ENCODE measurements at regions of chr15 and their contacts with region 1.

Region 1: DNA sequence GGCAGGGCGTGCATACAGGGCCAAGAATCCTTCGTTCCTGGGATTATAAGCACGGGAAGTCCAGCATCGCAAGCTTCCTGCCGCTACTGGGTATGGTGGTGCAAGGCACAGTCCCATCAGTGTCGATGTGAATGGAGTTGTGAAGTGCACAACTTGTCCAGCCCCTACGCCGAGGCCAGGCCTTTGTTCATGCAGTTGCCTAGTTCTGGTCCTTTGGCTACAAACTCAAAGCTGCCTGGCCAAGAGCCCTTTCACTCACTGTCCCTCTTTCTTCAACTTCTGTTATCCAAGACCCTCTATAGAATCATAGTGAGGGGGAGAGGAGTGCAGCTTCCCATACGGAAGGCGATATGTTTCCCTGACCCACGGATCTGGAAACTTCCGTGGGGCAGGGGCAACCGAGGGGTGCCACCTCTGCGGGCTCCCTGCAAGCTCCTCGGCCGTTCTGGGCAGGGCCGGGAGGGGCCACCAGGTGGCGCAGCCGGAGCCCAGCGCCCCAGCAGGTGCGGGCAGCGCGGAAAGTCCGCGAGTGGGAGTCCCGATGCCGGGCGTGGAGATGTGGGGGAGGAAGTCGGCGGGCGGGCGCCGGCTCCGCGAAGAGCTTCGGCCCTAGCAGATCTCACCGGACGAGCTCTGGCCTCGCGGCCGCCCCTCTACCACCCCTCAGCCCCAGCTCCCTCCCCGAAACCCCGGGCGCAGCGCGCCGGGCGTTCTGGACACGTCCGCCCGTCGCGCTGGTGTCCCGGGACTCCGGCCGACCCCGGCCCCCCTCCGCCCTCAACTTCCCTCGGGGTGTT is 693 bp downstream of the RASGRP1 start:
- DNase-seq: peak; percentile 56 to 79
- ATAC-seq: peak; percentile 70 to 94 (median 82)
- H3K4me3 ChIP-seq: peak overlapping the region; percentile 68
- H3K27ac ChIP-seq: no peak overlapping the region
- H3K4me1 ChIP-seq: peaks cover 3% of the 10 kb centered on the region
- H3K27me3 ChIP-seq: peaks cover 0 to 26% (median 0%) of the 10 kb centered on the region in 3 donors
- CTCF ChIP-seq: peak; percentile 75

Region 2: DNA sequence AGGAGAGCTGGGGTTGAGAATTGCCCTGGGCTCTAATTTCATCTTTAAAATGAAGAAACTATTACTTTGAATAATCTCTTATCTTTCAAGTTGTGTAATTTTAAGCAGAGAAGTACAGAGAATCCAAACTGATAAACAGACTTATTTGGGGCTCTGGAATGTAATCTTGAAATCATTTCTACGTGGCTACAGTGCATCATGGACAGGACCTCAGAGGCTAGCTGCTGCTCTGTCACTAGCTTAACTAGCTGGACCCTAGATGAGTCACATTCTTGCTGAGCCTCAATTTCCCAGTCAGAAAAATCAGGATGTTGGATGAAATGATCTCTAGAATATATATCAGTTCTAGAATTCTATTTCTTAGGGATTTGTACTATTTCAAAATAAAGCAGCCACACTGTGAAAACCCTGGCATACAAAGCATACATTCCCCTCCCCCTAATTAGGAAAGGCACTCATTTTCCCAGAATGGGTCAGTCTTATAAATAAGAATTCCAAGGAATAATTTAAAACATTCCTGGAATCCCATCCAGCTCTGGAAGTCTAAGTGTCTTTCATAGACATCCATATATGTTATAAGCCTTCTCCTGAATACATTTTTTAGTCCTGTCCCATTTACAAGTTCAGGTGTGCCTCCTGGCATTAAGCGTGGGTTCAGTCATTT is 46.5 kb before region 1 on chr15:
- intact Hi-C with region 1: loop called in 1 of 2 experiments (anchors 1 kb)
- DNase-seq: no peak
- ATAC-seq: no peak
- H3K4me3 ChIP-seq: no peak overlapping the region
- H3K27ac ChIP-seq: no peak overlapping the region
- H3K4me1 ChIP-seq: no peaks in the 10 kb centered on the region
- H3K27me3 ChIP-seq: peaks cover 0 to 12% (median 3%) of the 10 kb centered on the region in 3 donors
- CTCF ChIP-seq: no peak

Region 3: GRCh38 chr15:38647683-38648082 is 83.8 kb after region 1 on chr15:
- intact Hi-C with region 1: loop called in 1 of 2 experiments (anchors 5 kb)
- DNase-seq: no peak
- ATAC-seq: no peak
- H3K4me3 ChIP-seq: no peak overlapping the region
- H3K27ac ChIP-seq: no peak overlapping the region
- H3K4me1 ChIP-seq: no peaks in the 10 kb centered on the region
- H3K27me3 ChIP-seq: peaks cover 0 to 2% (median 0%) of the 10 kb centered on the region in 3 donors
- CTCF ChIP-seq: no peak

Region 4: DNA sequence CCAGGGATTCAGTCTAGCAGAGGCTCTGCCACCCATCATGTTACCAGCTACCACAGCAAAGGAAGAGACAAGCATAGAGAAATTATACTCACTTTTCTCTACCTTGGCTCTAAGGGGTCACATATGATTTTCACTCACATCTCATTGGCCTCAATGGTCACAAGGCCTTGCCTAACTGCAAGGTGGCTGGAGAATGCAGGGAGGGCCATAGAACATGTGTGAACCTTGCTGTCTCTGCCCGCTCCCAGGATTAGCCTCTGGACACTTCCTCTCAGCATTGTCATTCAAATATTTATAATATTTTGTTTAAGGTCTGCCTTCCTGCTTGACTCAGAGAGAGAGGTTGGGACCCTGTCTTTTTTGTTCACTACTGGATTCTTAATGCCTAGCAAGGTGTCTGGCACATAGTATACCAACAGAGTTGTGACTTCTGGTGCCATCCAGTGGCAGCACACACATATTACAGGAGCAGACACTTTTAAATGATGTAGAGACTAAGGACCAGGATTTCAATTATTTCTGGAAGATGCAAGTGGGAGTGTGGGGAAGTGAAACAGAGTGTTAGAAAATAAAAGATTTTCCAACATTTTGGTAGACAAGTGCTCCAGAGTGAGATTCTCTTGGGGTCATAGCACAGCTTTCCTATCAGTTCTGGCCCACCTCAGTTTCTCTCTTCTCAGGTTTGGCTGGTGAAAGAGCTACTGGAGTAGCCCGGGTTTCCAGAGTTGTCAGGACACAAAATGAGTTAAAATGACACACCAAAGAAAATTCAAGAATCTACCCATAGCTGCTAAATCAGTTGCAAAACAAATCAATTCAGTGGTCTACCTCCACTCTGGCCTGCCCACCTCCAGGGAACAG is 119.7 kb after region 1 on chr15:
- intact Hi-C with region 1: loop called (anchors 5 to 10 kb)
- DNase-seq: peak in 1 of 2 donors; percentile 15
- ATAC-seq: peak in 3 of 4 donors; percentile 56 to 74 (median 67)
- H3K4me3 ChIP-seq: no peak overlapping the region
- H3K27ac ChIP-seq: no peak overlapping the region
- H3K4me1 ChIP-seq: no peaks in the 10 kb centered on the region
- H3K27me3 ChIP-seq: peaks cover 0 to 4% (median 0%) of the 10 kb centered on the region in 3 donors
- CTCF ChIP-seq: peak; percentile 60